ENCODE measurements at regions of chr18 and their contacts with region 1.

Region 1: DNA sequence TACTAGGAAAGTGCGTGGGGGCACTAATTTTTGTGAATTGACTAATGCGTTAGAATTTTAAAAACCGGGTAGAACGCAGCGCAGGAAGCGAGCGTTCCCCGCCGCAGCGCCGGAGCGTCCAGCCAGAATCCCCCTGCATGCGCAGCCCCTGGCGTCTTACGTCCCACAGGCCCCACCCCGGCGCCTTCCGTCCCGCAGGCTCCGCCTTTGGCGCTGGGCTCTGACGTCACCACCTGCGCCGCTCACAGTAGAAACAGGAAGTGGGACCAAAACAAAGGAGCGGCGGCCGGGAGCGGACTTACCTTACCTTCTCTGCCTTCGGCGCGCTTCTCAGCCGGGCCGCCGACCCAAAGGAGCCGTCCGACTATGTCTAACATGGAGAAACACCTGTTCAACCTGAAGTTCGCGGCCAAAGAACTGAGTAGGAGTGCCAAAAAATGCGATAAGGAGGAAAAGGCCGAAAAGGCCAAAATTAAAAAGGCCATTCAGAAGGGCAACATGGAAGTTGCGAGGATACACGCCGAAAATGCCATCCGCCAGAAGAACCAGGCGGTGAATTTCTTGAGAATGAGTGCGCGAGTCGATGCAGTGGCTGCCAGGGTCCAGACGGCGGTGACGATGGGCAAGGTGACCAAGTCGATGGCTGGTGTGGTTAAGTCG is at the start of gene CHMP1B:
- DNase-seq: peak; percentile 95
- H3K4me3 ChIP-seq: peak within 1 kb of the TSS; percentile 55 to 85 (median 77)
- H3K27ac ChIP-seq: peak within 1 kb of the TSS; percentile 96
- H3K4me1 ChIP-seq: peaks cover 19% of the 10 kb centered on the region
- H3K27me3 ChIP-seq: no peaks in the 10 kb centered on the region
- CTCF ChIP-seq: no peak
- total RNA-seq, gene CHMP1B: 46.7 to 76.5 TPM

Region 2: DNA sequence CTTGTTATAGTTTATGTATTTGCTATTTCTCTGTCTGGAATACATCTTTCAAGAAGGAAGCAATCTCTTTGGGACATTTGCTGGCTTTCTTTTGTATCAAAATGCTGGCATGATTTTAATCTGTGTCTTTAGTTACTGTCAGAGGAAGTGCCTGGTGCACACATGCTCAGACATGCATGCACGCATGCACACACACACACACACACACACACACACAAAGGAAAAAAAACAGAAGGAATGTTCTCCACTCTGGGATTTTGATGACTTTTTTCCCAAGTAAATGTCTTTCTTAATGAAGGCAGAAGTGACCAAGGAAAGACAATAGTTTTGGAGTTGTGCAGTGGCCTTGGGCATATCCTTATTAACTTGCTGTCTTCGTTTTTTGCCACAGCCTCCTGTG is 155.5 kb before region 1 on chr18:
- CTCF ChIA-PET with region 1: no interaction called
- dilution Hi-C with region 1: no loop called
- in situ Hi-C with region 1: no loop called
- intact Hi-C with region 1: no loop called
- DNase-seq: peak; percentile 28
- H3K4me3 ChIP-seq: no peak overlapping the region
- H3K27ac ChIP-seq: no peak overlapping the region
- H3K4me1 ChIP-seq: peaks cover 8% of the 10 kb centered on the region
- H3K27me3 ChIP-seq: no peaks in the 10 kb centered on the region
- CTCF ChIP-seq: no peak

Region 3: DNA sequence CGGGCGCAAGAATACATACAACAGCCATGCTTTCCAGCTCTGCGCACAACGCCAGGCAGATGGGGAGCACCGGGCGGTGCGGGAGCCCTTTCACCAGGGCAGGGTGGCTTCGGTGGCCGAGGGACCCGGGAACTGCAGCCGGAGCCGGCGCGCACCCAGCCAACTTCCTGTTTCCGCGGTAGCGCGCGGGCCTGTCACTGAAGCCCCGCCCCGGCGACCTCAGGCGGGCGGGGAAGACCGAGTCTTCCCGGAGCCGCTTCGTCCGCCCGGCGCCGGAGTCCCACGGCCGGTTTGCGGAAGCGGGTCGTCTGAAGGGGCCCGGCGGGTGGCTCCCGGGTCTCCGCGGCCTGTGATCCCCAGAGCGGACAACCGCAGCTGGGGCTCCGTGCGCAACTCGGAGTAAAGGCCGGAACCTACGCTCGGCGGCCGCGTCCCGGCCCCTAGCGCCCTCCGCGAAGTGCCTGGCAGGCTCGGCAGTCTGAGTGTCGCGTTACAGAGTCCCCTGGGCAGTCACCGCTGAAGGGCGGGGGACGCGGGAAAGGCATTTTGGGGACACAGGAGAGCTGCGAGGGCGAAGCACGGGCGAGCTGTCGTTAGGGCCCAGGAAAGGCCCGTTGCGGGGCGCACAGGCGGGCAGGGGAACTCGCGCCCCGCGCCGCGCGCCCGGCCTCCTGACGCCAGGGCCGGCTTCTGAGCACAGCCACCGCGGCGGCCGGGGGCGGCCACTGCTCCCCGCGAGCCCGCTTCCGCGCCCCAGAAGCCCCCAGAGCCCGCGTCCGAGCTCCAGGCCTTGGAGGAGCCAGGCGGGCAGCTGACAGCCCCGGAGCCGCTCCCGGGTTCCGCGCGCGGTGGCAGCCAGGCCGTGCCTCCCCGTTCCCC is 57.1 kb after region 1 on chr18 and contains the start of gene MPPE1:
- CTCF ChIA-PET with region 1: interaction called, 3 read pairs
- dilution Hi-C with region 1: no loop called
- in situ Hi-C with region 1: no loop called
- intact Hi-C with region 1: loop called (anchors 2 kb)
- DNase-seq: peak; percentile 82
- H3K4me3 ChIP-seq: peak within 1 kb of the TSS; percentile 71 to 92 (median 85)
- H3K27ac ChIP-seq: peak within 1 kb of the TSS; percentile 90
- H3K4me1 ChIP-seq: peaks cover 6% of the 10 kb centered on the region
- H3K27me3 ChIP-seq: no peaks in the 10 kb centered on the region
- CTCF ChIP-seq: no peak
- total RNA-seq, gene MPPE1: 27.2 to 33.6 TPM

Region 4: GRCh38 chr18:12271376-12272235 is 420.3 kb after region 1 on chr18:
- CTCF ChIA-PET with region 1: no interaction called
- dilution Hi-C with region 1: no loop called
- in situ Hi-C with region 1: no loop called
- intact Hi-C with region 1: loop called (anchors 10 kb)
- DNase-seq: peak; percentile 65
- H3K4me3 ChIP-seq: peak overlapping the region; percentile 39 to 82 (median 49)
- H3K27ac ChIP-seq: peak overlapping the region; percentile 66
- H3K4me1 ChIP-seq: peaks cover 7% of the 10 kb centered on the region
- H3K27me3 ChIP-seq: no peaks in the 10 kb centered on the region
- CTCF ChIP-seq: peak; percentile 41 to 64